ENCODE measurements at regions of chr3 and their contacts with region 1.

Region 1: GRCh38 chr3:52123106-52123725 is 31.0 kb downstream of the POC1A start:
- DNase-seq: peak; percentile 77 to 89
- ATAC-seq: peak; percentile 82 to 97 (median 94)
- H3K4me3 ChIP-seq: no peak overlapping the region
- H3K4me3 Mint-ChIP-seq: no peak overlapping the region
- H3K27ac ChIP-seq: peak overlapping the region; percentile 24
- H3K27ac Mint-ChIP-seq: no peak overlapping the region
- H3K4me1 ChIP-seq: peaks cover 39% of the 10 kb centered on the region
- H3K4me1 Mint-ChIP-seq: peaks cover 13 to 15% of the 10 kb centered on the region in 2 donors
- H3K27me3 ChIP-seq: no peaks in the 10 kb centered on the region
- H3K27me3 Mint-ChIP-seq: no peaks in the 10 kb centered on the region
- CTCF ChIP-seq: peak; percentile 92

Region 2: DNA sequence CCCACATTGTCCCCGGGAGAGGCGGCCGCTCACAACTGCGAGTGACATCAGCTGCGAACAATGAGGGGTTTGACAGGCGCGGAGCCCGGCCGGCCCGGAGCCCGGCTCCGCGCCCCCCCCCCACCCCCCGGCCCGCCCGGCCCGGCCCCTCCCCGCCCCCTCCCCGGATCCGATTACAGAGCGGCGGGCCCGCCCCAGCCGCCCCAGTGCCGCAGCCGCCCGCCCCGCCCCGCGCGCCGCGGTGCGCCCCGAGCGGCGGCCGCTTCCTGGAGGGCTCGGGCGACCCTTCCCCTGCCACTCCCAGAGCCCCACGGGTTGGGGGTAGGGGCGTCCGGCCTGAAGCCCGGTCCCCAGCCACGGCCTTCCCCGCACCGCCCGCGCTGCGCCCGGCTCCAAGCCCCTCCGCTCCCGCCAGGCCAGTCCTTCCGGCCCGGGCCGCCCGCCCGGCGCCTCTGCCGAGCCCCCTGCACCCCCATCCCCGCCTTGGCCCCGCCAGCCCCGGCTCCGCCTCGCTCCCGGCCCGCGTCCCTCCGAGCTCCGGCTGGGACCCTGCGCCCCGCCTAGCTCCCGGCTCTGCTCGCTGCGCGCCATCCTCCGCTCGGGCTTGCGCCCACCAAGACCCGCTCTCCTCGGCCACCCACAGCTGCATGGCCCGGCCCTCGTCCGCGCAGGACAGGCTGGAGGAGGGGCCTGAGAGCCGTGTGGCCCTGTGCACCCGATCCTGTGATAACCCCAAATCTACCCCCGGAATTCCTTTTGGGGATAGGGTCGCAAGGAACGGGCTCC is 155.6 kb before region 1 on chr3 and contains the start of gene PCBP4:
- intact Hi-C with region 1: no loop called
- DNase-seq: peak in 1 of 2 donors; percentile 62
- ATAC-seq: peak; percentile 63 to 77 (median 77)
- H3K4me3 ChIP-seq: peak within 1 kb of the TSS; percentile 47
- H3K4me3 Mint-ChIP-seq: peak within 1 kb of the TSS; percentile 95
- H3K27ac ChIP-seq: no peak within 1 kb of the TSS
- H3K27ac Mint-ChIP-seq: peak within 1 kb of the TSS in 1 of 2 donors; percentile 85
- H3K4me1 ChIP-seq: peaks cover 18% of the 10 kb centered on the region
- H3K4me1 Mint-ChIP-seq: peaks cover 0 to 30% of the 10 kb centered on the region in 2 donors
- H3K27me3 ChIP-seq: peaks cover 3% of the 10 kb centered on the region
- H3K27me3 Mint-ChIP-seq: peaks cover 0 to 6% of the 10 kb centered on the region in 2 donors
- CTCF ChIP-seq: no peak
- total RNA-seq, gene PCBP4: 15.0 to 24.7 (median 18.4) TPM

Region 3: DNA sequence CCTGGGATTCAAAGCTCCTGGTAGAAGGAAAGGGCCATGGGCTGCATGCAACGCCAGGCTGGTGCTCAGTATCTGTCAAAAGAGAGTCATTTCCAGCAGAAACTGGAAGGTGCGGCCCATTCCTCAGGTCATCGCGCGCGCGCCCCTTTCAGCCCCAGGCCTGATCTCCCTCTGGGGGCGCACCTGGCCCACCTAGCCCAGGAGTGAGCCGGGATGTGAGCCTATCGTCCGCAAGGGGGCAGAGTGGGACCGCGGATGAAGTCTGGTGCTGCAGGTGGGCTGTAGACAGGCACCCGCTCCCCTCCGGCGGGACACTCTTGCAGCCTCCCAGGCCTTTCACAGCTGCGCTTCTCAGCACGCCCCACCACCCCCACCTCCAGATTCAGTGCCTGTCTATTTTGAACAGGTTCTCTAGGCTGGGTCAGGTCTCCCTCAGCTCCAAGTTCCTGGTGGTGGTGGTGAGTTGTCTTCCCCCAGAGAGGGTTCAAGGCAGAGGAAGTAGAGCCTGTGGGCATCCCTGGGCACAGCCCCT is 121.7 kb before region 1 on chr3:
- intact Hi-C with region 1: loop called (anchors 1 kb)
- DNase-seq: peak; percentile 85 to 94
- ATAC-seq: peak; percentile 91 to 99 (median 99)
- H3K4me3 ChIP-seq: no peak overlapping the region
- H3K4me3 Mint-ChIP-seq: no peak overlapping the region
- H3K27ac ChIP-seq: no peak overlapping the region
- H3K27ac Mint-ChIP-seq: no peak overlapping the region
- H3K4me1 ChIP-seq: peaks cover 17% of the 10 kb centered on the region
- H3K4me1 Mint-ChIP-seq: peaks cover 0 to 8% of the 10 kb centered on the region in 2 donors
- H3K27me3 ChIP-seq: no peaks in the 10 kb centered on the region
- H3K27me3 Mint-ChIP-seq: peaks cover 0 to 4% of the 10 kb centered on the region in 2 donors
- CTCF ChIP-seq: peak; percentile 93

Region 4: DNA sequence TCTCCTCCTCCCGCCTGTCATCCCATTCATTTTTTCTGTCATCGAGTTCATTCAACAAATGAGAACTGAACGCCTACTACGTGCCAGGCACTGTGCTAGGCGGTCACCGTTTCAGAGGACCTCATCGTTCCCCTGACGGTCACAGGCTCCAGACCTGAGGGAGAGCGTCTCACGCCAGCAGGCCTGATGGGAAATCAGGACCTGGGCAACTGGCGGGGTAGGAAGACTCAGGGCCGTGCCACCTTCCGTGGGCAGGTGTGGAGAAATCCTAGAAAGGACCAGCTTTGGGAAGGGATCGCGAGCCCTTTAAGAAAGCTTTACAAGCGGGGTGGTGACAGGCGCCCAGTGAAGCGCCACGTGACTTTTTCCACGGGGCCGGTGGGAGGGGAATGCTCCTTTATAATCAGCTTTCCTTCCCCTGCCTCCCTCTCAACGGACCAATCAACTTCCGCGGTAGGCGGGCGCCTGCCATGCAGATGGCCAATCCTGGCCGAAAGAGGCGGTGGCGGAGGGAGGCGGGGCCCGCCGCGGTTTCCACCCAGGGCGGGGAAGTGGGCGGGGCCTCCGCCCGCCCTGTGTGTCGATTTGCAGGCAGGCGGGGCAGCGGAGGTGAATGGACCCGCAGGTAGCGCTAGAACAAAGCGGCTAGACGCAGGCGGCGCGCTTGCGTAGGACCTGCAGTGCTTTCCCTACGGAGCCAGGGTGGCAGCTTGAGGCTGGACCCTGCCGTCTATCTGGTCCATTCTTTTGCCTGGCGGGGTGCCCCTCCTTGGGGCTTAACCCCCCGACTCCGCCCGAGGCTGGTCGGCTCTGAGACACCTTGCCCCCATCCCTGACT is 66.0 kb before region 1 on chr3:
- intact Hi-C with region 1: loop called (anchors 5 kb)
- DNase-seq: peak; percentile 97 to 99
- ATAC-seq: peak; percentile 84 to 93 (median 87)
- H3K4me3 ChIP-seq: peak overlapping the region; percentile 49
- H3K4me3 Mint-ChIP-seq: peak overlapping the region; percentile 93
- H3K27ac ChIP-seq: peak overlapping the region; percentile 73
- H3K27ac Mint-ChIP-seq: peak overlapping the region; percentile 92 to 93
- H3K4me1 ChIP-seq: peaks cover 56% of the 10 kb centered on the region
- H3K4me1 Mint-ChIP-seq: peaks cover 38 to 43% of the 10 kb centered on the region in 2 donors
- H3K27me3 ChIP-seq: no peaks in the 10 kb centered on the region
- H3K27me3 Mint-ChIP-seq: peaks cover 0 to 2% of the 10 kb centered on the region in 2 donors
- CTCF ChIP-seq: no peak

Region 5: GRCh38 chr3:52144034-52144795 is 21.0 kb after region 1 on chr3:
- intact Hi-C with region 1: loop called (anchors 1 kb)
- DNase-seq: peak; percentile 82 to 93
- ATAC-seq: peak; percentile 94 to 100 (median 99)
- H3K4me3 ChIP-seq: no peak overlapping the region
- H3K4me3 Mint-ChIP-seq: no peak overlapping the region
- H3K27ac ChIP-seq: no peak overlapping the region
- H3K27ac Mint-ChIP-seq: peak overlapping the region in 1 of 2 donors; percentile 77
- H3K4me1 ChIP-seq: peaks cover 7% of the 10 kb centered on the region
- H3K4me1 Mint-ChIP-seq: peaks cover 6 to 7% of the 10 kb centered on the region in 2 donors
- H3K27me3 ChIP-seq: no peaks in the 10 kb centered on the region
- H3K27me3 Mint-ChIP-seq: no peaks in the 10 kb centered on the region
- CTCF ChIP-seq: peak; percentile 88